Right ventricle myocardium inferior (tissue), 1 donor: ENCODE measurements at regions of chr2 and their contacts with region 1.

Region 1: DNA sequence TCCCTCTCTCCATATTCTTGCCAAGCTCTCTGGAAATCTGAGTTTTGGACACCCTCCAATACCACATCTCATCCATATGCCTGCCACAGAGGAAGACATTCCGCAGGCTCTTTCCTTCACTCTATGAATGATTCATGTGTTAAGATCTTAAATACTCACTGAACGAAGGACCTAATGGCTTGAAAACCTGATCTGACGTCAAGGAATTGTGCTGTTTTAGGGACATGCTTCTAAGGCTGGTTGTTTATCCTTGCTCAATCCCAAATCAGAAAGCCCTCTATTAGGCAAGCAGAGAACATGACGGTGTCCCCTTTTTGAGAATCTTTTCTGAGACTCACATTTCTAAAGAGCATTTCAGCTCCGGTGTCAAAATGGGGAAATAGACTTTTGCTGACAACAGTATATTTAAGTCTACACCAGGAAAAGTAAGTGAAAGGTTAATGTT is 83.7 kb upstream of the GALNT5 start:
- DNase-seq: no peak
- ATAC-seq: peak; percentile 81

Region 2: DNA sequence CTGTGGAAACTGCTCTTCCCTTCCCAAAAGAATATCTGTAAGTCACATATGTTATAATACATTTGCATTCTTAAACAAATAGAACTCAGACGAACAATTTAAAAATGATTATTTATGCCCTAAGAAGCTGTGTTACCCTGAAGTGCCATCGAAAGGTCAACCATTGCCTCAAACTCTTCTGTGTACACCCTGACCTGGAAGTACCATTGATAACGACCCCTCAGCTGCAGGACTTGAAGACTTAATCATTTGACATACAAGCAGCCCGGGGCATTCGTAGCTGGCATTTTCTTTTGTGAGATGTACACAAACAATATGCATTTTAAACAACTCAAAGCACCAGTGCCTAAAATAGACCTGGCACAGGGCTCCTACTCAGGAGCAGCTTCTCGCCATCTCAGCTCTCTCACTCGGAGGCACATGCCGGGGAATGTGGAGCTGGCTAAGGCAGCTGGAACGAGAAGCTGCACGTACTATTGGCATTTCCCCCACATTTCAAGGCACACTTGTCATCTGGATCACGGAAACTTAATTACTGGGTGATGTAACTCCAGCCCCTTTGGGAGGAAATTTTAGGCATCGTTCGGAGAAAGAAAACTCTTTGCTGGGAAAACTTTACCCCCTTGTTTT is 86.3 kb before region 1 on chr2:
- intact Hi-C with region 1: loop called (anchors 5 kb)
- DNase-seq: peak; percentile 68
- ATAC-seq: peak; percentile 90

Region 3: DNA sequence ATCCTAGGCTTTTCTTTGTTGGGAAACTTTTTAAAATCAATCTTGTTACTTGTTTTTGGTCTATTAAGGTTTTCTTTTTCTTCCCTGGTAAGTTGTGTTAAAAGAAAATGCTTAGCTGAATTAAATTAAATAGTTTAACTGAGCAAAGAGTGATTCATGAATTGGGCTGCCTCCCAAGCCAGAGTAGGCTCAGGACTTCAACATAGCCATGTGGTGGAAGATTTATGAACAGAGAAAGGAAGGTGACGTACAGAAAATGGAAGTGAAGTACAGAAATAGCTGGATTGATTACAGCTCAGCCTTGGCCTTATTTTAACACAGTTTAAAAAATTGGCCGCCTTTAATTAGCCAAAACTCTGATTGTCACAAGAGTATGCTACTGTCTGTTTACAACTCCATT is 55.8 kb after region 1 on chr2:
- intact Hi-C with region 1: no loop called
- DNase-seq: no peak
- ATAC-seq: no peak